GM12878 (cell line): ENCODE measurements at regions of chr17 and their contacts with region 1.

Region 1: DNA sequence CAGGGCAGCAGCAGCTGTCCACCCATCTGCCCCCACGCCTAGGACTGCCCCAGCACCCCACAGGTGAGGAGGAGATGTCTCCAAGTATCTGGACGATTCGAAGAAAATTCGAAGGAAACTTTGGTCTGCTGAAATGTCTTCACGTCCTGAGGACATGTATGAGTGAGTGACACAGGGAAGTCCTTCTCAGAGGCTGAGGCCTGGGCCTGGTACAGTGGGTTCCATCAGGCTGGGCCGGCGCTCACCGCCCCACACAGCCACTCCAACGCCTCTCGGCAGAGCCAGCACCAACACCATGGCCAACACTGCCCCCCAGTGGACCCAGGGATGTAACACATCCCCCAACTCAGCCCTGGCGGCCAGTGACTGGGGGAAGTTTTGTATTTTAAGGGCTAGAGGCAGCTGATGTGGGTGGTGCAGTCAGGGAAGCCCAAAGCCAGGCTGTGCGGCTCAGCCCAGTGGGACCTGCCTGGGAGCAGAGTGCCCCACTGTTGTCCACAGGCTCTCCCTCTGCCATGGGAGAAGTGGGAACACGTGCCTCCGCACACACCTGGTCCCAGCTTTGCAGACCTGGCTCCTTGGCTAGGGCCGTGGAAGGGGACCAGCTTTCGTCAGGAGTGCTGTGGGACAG is 55.8 kb upstream of the FASN start:
- DNase-seq: no peak
- ATAC-seq: peak; percentile 99
- H3K4me3 ChIP-seq: no peak overlapping the region
- H3K27ac ChIP-seq: no peak overlapping the region
- H3K4me1 ChIP-seq: no peaks in the 10 kb centered on the region
- H3K27me3 ChIP-seq: no peaks in the 10 kb centered on the region
- CTCF ChIP-seq: peak; percentile 86 to 93 (median 91)
- EP300 ChIP-seq: no peak
- POLR2A ChIP-seq: no peak
- RAD21 ChIP-seq: peak; percentile 95

Region 2: GRCh38 chr17:81840826-81841778 is 312.8 kb before region 1 on chr17:
- CTCF ChIA-PET with region 1: no interaction called
- POLR2A ChIA-PET with region 1: no interaction called
- RAD21 ChIA-PET with region 1: no interaction called
- SMC1A ChIA-PET with region 1: no interaction called
- in situ Hi-C with region 1: no loop called
- intact Hi-C with region 1: no loop called
- DNase-seq: no peak
- ATAC-seq: no peak
- H3K4me3 ChIP-seq: no peak overlapping the region
- H3K27ac ChIP-seq: no peak overlapping the region
- H3K4me1 ChIP-seq: no peaks in the 10 kb centered on the region
- H3K27me3 ChIP-seq: no peaks in the 10 kb centered on the region
- CTCF ChIP-seq: no peak
- EP300 ChIP-seq: no peak
- POLR2A ChIP-seq: no peak
- RAD21 ChIP-seq: no peak

Region 3: DNA sequence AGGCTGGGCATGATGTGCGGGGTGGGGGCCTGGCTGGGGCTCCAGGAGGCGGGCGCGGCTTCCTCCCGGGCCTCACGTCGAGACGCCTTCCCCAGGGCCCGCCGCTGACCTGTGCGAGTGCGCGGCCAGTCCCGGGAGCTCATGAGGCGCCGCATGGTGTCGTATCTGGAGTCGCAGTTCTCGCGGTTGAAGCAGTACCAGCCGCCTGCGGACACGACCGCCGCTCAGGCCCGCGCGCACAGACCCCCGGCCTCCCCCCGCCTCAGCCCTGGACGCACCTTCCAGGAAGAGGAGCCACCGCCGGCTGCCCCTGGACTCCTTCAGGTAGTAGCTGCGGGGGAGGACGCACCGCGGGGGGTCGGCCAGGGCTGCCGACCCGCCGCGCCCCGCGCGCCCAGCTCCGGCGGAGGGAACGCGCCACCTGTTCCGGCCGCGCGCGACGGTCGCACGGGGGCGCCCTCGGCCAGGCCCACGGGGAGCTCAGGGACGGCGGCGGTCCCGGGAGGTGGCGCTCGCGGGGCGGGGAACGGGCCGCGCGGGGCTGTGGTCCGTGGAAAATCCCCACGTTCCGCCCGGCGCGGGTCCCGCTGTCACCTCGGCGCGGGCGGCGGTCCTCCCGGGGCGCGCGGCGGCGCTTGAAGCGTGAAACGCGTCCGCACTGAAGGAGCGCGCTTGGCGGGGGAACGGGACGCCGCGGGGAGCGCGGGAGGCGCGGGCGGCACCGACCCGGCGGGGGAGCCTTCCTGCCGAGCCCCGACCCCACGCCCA is 194.3 kb before region 1 on chr17:
- CTCF ChIA-PET with region 1: interaction called, 5 read pairs
- POLR2A ChIA-PET with region 1: no interaction called
- RAD21 ChIA-PET with region 1: interaction called, 4 read pairs
- SMC1A ChIA-PET with region 1: interaction called, 4 read pairs
- in situ Hi-C with region 1: no loop called
- intact Hi-C with region 1: loop called (anchors 1 kb)
- DNase-seq: no peak
- ATAC-seq: peak; percentile 96
- H3K4me3 ChIP-seq: no peak overlapping the region
- H3K27ac ChIP-seq: no peak overlapping the region
- H3K4me1 ChIP-seq: no peaks in the 10 kb centered on the region
- H3K27me3 ChIP-seq: peaks cover 8 to 20% of the 10 kb centered on the region in 2 experiments
- CTCF ChIP-seq: peak; percentile 73 to 99 (median 74); a peak in 4 of 6 replicates
- EP300 ChIP-seq: no peak
- POLR2A ChIP-seq: no peak
- RAD21 ChIP-seq: peak; percentile 95

Region 4: GRCh38 chr17:82030470-82031302 is 123.2 kb before region 1 on chr17:
- CTCF ChIA-PET with region 1: interaction called, 19 read pairs
- POLR2A ChIA-PET with region 1: no interaction called
- RAD21 ChIA-PET with region 1: interaction called, 4 read pairs
- SMC1A ChIA-PET with region 1: interaction called, 13 read pairs
- in situ Hi-C with region 1: loop called (anchors 5 kb)
- intact Hi-C with region 1: no loop called
- DNase-seq: no peak
- ATAC-seq: peak; percentile 86
- H3K4me3 ChIP-seq: peak overlapping the region; percentile 65; the same call in 1 of the 2 replicates
- H3K27ac ChIP-seq: no peak overlapping the region
- H3K4me1 ChIP-seq: no peaks in the 10 kb centered on the region; the same call in 1 of the 2 replicates
- H3K27me3 ChIP-seq: no peaks in the 10 kb centered on the region
- CTCF ChIP-seq: peak; percentile 77 to 95 (median 94); a peak in 5 of 6 replicates
- EP300 ChIP-seq: no peak
- POLR2A ChIP-seq: no peak
- RAD21 ChIP-seq: peak; percentile 94

Region 5: GRCh38 chr17:82037113-82037888 is 116.6 kb before region 1 on chr17 and contains the start of gene DCXR:
- CTCF ChIA-PET with region 1: interaction called, 4 read pairs
- POLR2A ChIA-PET with region 1: interaction called, 10 read pairs
- RAD21 ChIA-PET with region 1: interaction called, 4 read pairs
- SMC1A ChIA-PET with region 1: interaction called, 3 read pairs
- in situ Hi-C with region 1: loop called (anchors 5 kb)
- intact Hi-C with region 1: no loop called
- DNase-seq: peak; percentile 72
- ATAC-seq: peak; percentile 98
- H3K4me3 ChIP-seq: peak within 1 kb of the TSS; percentile 81
- H3K27ac ChIP-seq: peak within 1 kb of the TSS; percentile 89
- H3K4me1 ChIP-seq: peaks cover 10% of the 10 kb centered on the region
- H3K27me3 ChIP-seq: no peaks in the 10 kb centered on the region
- CTCF ChIP-seq: peak; percentile 83 to 94 (median 89)
- EP300 ChIP-seq: no peak
- POLR2A ChIP-seq: peak; percentile 99
- RAD21 ChIP-seq: no peak
- polyA plus RNA-seq, gene DCXR: 12.3 to 44.8 TPM

Region 6: DNA sequence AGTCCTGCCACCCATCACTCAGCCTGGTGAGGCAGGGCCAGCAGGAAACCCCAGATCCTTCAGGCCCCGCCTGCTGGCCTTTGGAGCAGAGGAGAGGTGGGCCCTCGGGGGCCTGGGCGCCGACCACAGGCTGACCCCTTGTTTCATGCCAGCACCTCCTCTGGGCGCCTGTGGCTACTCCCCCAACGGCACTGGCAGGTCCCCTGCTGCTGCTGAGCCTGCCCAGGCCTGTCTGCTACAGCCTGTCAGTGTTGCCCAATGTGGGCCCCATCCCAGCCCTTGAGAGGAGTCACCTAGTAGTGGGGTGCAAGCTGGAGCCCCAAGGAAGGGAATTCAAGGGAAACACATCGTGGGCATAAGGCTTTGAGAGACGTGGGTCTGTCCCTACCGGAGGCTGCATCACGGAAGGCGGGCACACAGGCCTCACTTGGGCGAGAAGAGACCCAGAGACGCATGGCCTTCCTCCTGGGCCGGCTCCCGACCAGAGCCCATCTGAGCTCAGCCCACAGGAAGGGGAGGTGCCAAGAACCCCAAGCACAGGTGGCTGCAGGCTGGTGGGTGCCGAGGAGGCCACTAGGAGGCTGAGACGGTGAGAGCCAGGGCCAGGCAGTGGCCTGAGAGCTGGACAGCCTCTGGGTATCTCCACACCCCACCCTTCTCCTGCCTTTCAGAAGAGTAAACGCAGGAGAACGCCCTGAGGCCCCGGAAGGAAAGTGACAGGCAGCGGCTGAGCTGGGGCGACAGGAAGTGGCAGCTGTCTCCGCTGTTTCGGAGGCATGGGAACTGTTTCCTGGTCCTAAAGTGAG is 47.8 kb before region 1 on chr17:
- CTCF ChIA-PET with region 1: interaction called, 7 read pairs
- POLR2A ChIA-PET with region 1: interaction called, 4 read pairs
- RAD21 ChIA-PET with region 1: interaction called, 3 read pairs
- SMC1A ChIA-PET with region 1: interaction called, 3 read pairs
- in situ Hi-C with region 1: no loop called
- intact Hi-C with region 1: loop called (anchors 5 kb)
- DNase-seq: peak; percentile 51
- ATAC-seq: peak; percentile 99
- H3K4me3 ChIP-seq: peak overlapping the region; percentile 77
- H3K27ac ChIP-seq: peak overlapping the region; percentile 87
- H3K4me1 ChIP-seq: peaks cover 21% of the 10 kb centered on the region
- H3K27me3 ChIP-seq: no peaks in the 10 kb centered on the region
- CTCF ChIP-seq: peak; percentile 46 to 63 (median 56)
- EP300 ChIP-seq: no peak
- POLR2A ChIP-seq: peak; percentile 95
- RAD21 ChIP-seq: no peak

Region 7: GRCh38 chr17:82292251-82293154 is 138.6 kb after region 1 on chr17:
- CTCF ChIA-PET with region 1: no interaction called
- POLR2A ChIA-PET with region 1: no interaction called
- RAD21 ChIA-PET with region 1: no interaction called
- SMC1A ChIA-PET with region 1: no interaction called
- in situ Hi-C with region 1: no loop called
- intact Hi-C with region 1: no loop called
- DNase-seq: peak; percentile 95
- ATAC-seq: peak; percentile 97
- H3K4me3 ChIP-seq: peak overlapping the region; percentile 64
- H3K27ac ChIP-seq: peak overlapping the region; percentile 84
- H3K4me1 ChIP-seq: peaks cover 12% of the 10 kb centered on the region
- H3K27me3 ChIP-seq: no peaks in the 10 kb centered on the region
- CTCF ChIP-seq: no peak
- EP300 ChIP-seq: peak in 1 of 2 experiments; percentile 34; a peak in 1 of 4 replicates
- POLR2A ChIP-seq: peak; percentile 99
- RAD21 ChIP-seq: no peak